ENCODE measurements at regions of chr3 and their contacts with region 1.

Region 1: DNA sequence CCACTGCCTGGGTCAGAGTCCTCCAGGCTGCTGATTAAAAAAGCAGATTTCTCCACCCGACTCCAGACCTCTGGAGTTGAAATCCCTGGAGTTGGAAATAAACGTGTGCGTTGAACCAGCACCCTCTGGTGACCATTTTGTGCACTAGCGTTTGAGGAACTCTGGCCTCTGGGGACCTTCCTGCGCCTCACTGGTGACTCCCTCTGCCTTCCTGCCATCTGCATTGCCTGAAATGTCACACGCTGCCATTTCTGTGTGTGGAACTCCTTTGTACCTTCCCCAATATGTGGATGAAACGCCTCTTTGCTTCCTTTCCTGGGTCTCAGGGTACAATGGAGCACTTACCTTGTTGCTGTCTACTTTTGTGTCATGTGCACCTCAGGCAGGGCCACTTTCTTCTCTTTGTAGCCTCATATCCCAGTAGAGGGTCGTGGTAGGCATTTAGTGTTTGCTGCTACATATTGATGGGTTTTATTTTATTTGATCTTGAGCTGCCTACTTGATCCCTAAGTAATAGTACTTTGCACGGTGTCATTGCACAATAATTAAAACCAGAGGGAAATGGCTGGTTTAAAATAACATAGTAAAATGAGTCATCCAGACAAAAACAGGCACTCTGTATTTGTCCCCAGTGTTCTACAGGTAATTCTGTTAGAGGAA is 56.8 kb downstream of the GPR171 start:
- DNase-seq: peak; percentile 75
- ATAC-seq: peak; percentile 97
- H3K4me3 ChIP-seq: no peak overlapping the region
- H3K27ac ChIP-seq: no peak overlapping the region
- H3K4me1 ChIP-seq: peaks cover 7% of the 10 kb centered on the region; the same call in 1 of the 2 replicates
- H3K27me3 ChIP-seq: peaks cover 14% of the 10 kb centered on the region; the same call in 1 of the 2 replicates
- CTCF ChIP-seq: peak; percentile 96

Region 2: GRCh38 chr3:150538324-150539208 is 607.6 kb before region 1 on chr3:
- CTCF ChIA-PET with region 1: no interaction called
- POLR2A ChIA-PET with region 1: interaction called, 4 read pairs
- in situ Hi-C with region 1: no loop called
- intact Hi-C with region 1: loop called (anchors 10 kb)
- DNase-seq: no peak
- ATAC-seq: peak; percentile 60
- H3K4me3 ChIP-seq: no peak overlapping the region
- H3K27ac ChIP-seq: no peak overlapping the region
- H3K4me1 ChIP-seq: peaks cover 8% of the 10 kb centered on the region
- H3K27me3 ChIP-seq: no peaks in the 10 kb centered on the region
- CTCF ChIP-seq: no peak

Region 3: DNA sequence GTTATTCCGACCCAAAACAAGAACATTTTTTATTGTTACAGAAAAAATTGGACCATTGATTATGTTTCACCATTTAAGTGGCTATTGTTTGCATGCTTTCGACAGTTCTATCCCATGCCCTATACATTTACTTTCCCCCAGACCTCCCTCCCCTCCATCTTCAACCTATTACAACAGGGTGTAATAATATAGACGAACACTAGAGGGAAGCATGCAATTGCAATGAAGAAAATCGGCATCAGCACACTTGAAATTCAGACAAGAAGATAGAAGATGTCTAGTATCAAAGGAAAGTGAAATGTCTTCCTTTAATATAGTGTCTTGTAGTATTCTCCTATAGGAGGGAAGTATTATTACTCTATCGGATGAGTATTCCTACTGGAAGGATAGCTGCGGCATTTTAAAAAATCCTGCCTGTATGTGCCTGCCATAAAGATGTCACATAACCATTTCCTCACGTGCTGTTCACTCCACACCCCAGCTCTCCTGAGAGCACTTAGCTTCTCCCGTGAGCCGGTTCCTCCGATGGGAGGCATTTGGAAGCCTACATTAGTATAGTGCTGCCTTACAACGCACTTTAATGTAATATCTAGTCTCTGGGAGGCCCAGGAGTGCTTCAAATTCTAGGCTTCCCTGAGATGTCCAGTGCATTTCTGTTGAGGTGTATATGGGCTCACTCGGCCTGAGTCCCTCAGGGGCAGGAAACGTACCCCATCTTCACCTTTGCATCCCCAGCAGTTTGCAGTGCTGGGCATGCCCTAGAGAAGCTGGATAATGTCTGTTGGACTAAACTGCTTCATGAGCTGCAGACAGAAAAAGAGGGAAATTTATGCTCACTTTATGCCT is 424.7 kb before region 1 on chr3:
- CTCF ChIA-PET with region 1: no interaction called
- POLR2A ChIA-PET with region 1: no interaction called
- in situ Hi-C with region 1: no loop called
- intact Hi-C with region 1: loop called (anchors 5 kb)
- DNase-seq: no peak
- ATAC-seq: peak; percentile 85
- H3K4me3 ChIP-seq: no peak overlapping the region
- H3K27ac ChIP-seq: no peak overlapping the region
- H3K4me1 ChIP-seq: no peaks in the 10 kb centered on the region
- H3K27me3 ChIP-seq: no peaks in the 10 kb centered on the region
- CTCF ChIP-seq: peak; percentile 86

Region 4: DNA sequence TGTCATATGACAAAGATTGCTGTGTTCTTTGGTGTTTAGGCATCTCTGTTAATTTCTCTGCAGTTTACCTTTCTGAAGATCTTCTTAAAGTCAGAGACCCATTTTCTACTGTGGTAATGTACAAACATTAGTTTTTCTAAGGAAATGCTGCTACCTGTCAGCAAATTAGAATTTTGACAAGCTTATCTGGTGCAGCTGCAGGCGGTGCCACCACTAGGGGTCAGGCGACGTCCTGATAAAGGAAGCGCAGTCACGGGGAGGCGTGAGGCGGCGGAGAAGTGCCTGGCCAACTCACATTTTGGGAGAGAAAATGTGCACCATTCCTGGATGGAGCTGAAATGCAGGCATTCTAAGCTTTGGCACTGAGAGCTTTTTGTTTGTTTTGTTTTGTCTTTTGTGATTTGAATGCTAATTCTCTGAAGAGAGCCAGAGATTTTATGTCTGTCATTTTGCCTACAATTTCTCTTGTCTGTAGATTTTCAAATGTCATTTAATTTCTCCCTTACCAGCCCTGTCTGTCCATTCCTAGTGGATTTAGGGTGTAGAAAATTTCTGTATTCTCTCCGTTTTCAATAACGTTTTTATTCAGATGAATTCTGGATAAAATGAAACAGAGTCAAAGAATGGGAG is 358.3 kb before region 1 on chr3:
- CTCF ChIA-PET with region 1: no interaction called
- POLR2A ChIA-PET with region 1: no interaction called
- in situ Hi-C with region 1: no loop called
- intact Hi-C with region 1: loop called (anchors 1 kb)
- DNase-seq: no peak
- ATAC-seq: peak; percentile 93
- H3K4me3 ChIP-seq: no peak overlapping the region
- H3K27ac ChIP-seq: no peak overlapping the region
- H3K4me1 ChIP-seq: no peaks in the 10 kb centered on the region
- H3K27me3 ChIP-seq: peaks cover 11% of the 10 kb centered on the region; the same call in 1 of the 2 replicates
- CTCF ChIP-seq: peak; percentile 97

Region 5: GRCh38 chr3:150925751-150926201 is 220.4 kb before region 1 on chr3:
- CTCF ChIA-PET with region 1: no interaction called
- POLR2A ChIA-PET with region 1: no interaction called
- in situ Hi-C with region 1: no loop called
- intact Hi-C with region 1: loop called (anchors 5 kb)
- DNase-seq: peak; percentile 8
- ATAC-seq: peak; percentile 91
- H3K4me3 ChIP-seq: no peak overlapping the region
- H3K27ac ChIP-seq: no peak overlapping the region
- H3K4me1 ChIP-seq: 0 out of 2 replicates have a peak, but pooled peaks cover 3% of the 10 kb centered on the region
- H3K27me3 ChIP-seq: peaks cover 31% of the 10 kb centered on the region
- CTCF ChIP-seq: peak; percentile 90

Region 6: GRCh38 chr3:151008699-151009098 is 137.5 kb before region 1 on chr3:
- CTCF ChIA-PET with region 1: interaction called, 5 read pairs
- POLR2A ChIA-PET with region 1: no interaction called
- in situ Hi-C with region 1: no loop called
- intact Hi-C with region 1: loop called (anchors 5 kb)
- DNase-seq: no peak
- ATAC-seq: peak; percentile 63; the same call in 1 of the 2 replicates
- H3K4me3 ChIP-seq: no peak overlapping the region
- H3K27ac ChIP-seq: no peak overlapping the region
- H3K4me1 ChIP-seq: no peaks in the 10 kb centered on the region
- H3K27me3 ChIP-seq: peaks cover 5% of the 10 kb centered on the region; the same call in 1 of the 2 replicates
- CTCF ChIP-seq: peak; percentile 41

Region 7: GRCh38 chr3:151067158-151067557 is 79.0 kb before region 1 on chr3:
- CTCF ChIA-PET with region 1: no interaction called
- POLR2A ChIA-PET with region 1: no interaction called
- in situ Hi-C with region 1: no loop called
- intact Hi-C with region 1: loop called (anchors 2 kb)
- DNase-seq: no peak
- ATAC-seq: peak; percentile 73
- H3K4me3 ChIP-seq: no peak overlapping the region
- H3K27ac ChIP-seq: no peak overlapping the region
- H3K4me1 ChIP-seq: no peaks in the 10 kb centered on the region
- H3K27me3 ChIP-seq: peaks cover 6% of the 10 kb centered on the region; the same call in 1 of the 2 replicates
- CTCF ChIP-seq: peak; percentile 82